ENCODE measurements at regions of chr2 and their contacts with region 1.

Region 1: GRCh38 chr2:134451347-134451630 is 197.4 kb downstream of the MGAT5 start:
- DNase-seq: no peak
- H3K4me3 ChIP-seq: no peak overlapping the region
- H3K27ac ChIP-seq: no peak overlapping the region
- H3K4me1 ChIP-seq: peaks cover 4% of the 10 kb centered on the region
- H3K27me3 ChIP-seq: no peaks in the 10 kb centered on the region
- CTCF ChIP-seq: no peak

Region 2: DNA sequence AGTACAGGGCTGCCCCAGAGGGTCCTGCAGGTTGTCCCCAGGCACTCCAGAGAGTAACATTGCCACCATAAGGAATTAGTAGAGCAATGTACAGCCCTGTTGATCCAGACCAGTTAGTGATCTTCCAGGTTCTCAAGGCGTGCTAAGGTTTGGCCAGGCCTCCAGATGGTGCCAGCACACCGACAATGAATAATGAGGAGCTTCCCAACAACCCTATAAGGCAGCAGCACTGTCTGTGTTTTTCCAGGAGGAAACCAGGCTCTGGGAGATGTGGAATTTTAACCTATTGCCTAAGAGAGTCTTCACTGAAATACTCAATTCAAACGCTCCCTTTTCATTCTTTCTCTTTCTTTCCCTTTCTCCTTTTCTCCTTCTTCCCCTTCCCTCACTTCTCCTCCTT is 75.4 kb before region 1 on chr2:
- CTCF ChIA-PET with region 1: no interaction called
- dilution Hi-C with region 1: no loop called
- in situ Hi-C with region 1: no loop called
- intact Hi-C with region 1: loop called (anchors 1 kb)
- DNase-seq: no peak
- H3K4me3 ChIP-seq: no peak overlapping the region
- H3K27ac ChIP-seq: no peak overlapping the region
- H3K4me1 ChIP-seq: peaks cover 39% of the 10 kb centered on the region
- H3K27me3 ChIP-seq: no peaks in the 10 kb centered on the region
- CTCF ChIP-seq: peak; percentile 41 to 65